BJ (cell line): ENCODE measurements at regions of chr4 and their contacts with region 1.

Region 1: GRCh38 chr4:150123796-150124677 is 45.8 kb downstream of the DCLK2 start:
- DNase-seq: no peak
- H3K4me3 ChIP-seq: no peak overlapping the region
- H3K27me3 ChIP-seq: no peaks in the 10 kb centered on the region
- CTCF ChIP-seq: no peak

Region 2: GRCh38 chr4:150136481-150136880 is 12.4 kb after region 1 on chr4:
- CTCF ChIA-PET with region 1: interaction called, 11 read pairs
- POLR2A ChIA-PET with region 1: no interaction called
- DNase-seq: no peak
- H3K4me3 ChIP-seq: no peak overlapping the region
- H3K27me3 ChIP-seq: no peaks in the 10 kb centered on the region
- CTCF ChIP-seq: no peak